Activated naive CD4-positive, alpha-beta T cell treated with anti-CD3 and anti-CD28 coated beads for 36 hours (primary cell): ENCODE measurements at regions of chr5 and their contacts with region 1.

Region 1: GRCh38 chr5:149960272-149961185 is at the start of gene SLC26A2:
- DNase-seq: peak; percentile 97
- H3K4me3 Mint-ChIP-seq: peak within 1 kb of the TSS; percentile 98
- H3K27ac Mint-ChIP-seq: peak within 1 kb of the TSS; percentile 100
- H3K4me1 Mint-ChIP-seq: peaks cover 30% of the 10 kb centered on the region
- H3K27me3 Mint-ChIP-seq: no peaks in the 10 kb centered on the region
- total RNA-seq, gene SLC26A2: 3.5 to 3.7 TPM

Region 2: DNA sequence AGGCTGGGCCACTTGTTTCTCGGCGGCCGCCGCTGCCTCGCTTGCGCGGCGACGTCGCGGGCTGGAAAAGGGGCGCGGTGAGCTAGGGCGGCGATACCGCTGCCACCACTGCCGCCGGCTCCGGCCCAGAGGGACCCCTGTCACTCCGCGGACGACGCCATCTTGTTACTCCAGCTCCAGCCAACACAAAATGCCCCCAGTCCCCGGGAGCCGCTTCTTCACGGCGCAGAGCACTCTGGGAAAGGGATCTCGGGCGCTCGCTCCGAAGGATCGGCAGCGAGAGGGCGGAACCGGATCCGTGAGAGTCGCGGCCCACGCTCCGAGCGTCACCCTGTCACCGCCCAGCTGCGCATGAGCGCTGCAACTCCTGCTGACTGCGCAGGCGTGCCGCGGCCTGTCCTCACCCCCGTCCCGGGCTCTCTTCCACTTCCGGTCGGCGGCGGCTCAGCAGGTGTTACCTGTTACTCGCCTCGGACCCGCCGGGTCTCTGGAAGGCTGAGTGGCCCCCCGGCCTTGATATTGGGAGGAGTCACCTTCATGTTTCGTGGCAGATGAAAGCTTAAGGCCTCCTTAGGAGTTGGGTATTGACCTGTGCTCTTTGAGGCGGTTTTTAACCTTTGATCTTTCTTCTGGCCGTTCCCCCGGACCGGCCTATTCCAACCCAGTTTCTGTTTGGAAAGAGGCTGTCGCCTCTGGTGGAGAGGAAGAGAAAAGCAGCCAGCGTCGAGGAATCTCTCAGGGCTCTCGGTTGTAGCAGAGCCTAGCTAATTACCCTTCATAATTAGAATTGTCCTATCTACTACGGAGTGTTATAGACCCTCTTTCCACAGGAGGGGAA is 409.1 kb before region 1 on chr5 and contains the start of gene CSNK1A1:
- CTCF ChIA-PET with region 1: no interaction called
- intact Hi-C with region 1: loop called (anchors 1 kb)
- DNase-seq: peak; percentile 99
- H3K4me3 Mint-ChIP-seq: peak within 1 kb of the TSS; percentile 97
- H3K27ac Mint-ChIP-seq: peak within 1 kb of the TSS; percentile 99
- H3K4me1 Mint-ChIP-seq: peaks cover 32% of the 10 kb centered on the region
- H3K27me3 Mint-ChIP-seq: no peaks in the 10 kb centered on the region
- total RNA-seq, gene CSNK1A1: 183 to 188 TPM

Region 3: DNA sequence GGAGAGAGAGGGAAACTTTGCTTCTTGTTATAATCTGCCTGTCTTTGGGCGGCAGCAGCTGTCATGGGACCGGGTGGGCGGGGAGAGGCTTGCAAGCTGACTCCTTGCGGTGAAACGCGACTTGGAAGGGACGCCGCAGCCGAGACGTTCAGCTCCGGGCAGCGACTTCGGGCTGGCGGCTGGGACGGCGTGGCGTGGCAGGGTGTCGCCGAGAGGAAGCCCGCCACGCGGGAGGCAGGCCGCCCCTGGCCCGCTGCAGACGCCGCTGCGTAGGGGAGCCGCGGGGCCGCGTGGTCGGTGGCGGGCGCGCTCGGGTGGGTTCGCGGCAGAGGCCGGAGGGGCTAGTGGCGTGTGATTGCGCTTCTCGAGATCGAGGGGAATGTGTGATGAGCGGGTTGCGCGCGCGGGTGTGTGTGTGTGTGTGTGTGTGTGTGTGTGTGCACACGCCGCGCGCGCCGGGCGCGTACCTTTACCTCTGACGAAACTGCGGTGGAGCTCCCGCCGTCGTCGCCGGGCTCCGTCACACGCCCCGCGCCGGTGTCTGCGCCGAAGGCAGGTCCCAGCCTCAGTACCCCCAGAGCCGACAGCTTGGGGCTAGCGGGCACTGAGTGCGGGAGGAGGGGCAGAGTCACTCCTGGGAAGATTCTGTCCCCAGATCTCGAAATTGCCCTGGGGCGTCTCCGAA is 228.7 kb before region 1 on chr5:
- CTCF ChIA-PET with region 1: no interaction called
- intact Hi-C with region 1: loop called (anchors 1 kb)
- DNase-seq: peak; percentile 90
- H3K4me3 Mint-ChIP-seq: peak overlapping the region; percentile 81
- H3K27ac Mint-ChIP-seq: peak overlapping the region; percentile 56
- H3K4me1 Mint-ChIP-seq: peaks cover 4% of the 10 kb centered on the region
- H3K27me3 Mint-ChIP-seq: no peaks in the 10 kb centered on the region

Region 4: DNA sequence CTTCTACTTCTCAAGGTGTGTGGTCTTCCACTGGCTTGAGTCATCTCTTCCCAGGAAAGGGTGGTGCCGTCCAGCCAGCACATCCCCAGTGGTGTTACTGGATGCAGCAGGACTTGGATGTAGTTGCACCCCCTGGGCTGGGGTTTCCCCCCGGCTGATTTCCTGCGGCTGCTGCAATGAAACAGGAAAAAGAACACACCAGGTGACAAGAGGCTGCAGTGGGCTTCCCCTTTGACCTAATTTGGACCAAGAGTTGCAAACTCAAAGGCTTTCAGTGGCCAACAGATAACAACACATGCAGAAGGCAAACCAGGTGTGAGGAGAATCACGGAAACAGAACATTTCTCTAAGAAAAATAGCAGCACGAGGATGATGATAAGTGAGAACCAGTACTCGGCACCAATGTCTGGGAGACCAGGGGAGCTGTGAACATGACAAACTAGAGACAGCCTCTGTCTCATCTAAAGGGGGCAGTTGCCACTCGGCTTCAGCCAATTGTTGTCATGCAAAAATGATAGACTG is 99.7 kb before region 1 on chr5:
- CTCF ChIA-PET with region 1: interaction called, 4 read pairs
- intact Hi-C with region 1: loop called (anchors 1 kb)
- DNase-seq: peak; percentile 57
- H3K4me3 Mint-ChIP-seq: no peak overlapping the region
- H3K27ac Mint-ChIP-seq: peak overlapping the region; percentile 9
- H3K4me1 Mint-ChIP-seq: peaks cover 6% of the 10 kb centered on the region
- H3K27me3 Mint-ChIP-seq: no peaks in the 10 kb centered on the region

Region 5: DNA sequence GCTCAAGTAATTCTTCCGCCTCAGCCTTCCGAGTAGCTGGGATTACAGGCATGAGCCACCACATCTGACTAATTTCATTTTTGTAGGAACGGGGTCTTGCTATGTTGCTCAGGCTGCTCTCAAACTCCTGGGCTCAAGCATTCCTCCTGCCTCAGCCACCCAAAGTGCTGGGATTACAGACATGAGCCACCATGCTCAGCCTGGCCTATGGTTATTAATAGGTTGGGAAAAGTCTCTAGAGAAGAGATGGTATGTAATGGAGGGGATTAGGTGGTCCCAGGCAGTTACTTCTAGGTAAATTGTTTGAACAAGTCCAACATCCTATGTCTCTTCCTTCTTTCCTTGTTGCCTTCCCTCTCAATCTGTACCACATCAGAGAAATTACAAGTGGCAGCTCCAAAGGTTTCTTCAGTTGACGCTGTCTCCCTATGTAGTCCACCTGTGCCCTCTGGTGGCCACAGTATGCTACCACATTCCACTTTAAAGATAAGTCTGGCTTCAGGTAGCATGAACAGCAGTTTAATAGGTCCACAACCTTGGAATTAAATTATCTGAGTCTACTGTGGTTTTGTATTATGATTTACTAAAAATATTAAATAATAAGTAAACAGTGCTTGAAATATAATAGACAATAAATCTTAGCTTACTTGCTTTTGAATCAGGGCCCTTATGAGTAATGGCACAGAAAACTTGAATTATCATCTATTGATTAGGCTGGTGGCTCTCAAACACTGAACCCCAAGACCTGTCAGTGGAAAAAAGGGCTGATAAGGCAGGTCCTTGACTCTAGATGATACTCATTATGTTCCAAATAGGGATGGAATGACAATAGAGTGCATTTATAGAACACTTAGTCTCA is 30.2 kb after region 1 on chr5:
- CTCF ChIA-PET with region 1: interaction called, 9 read pairs
- intact Hi-C with region 1: loop called (anchors 1 kb)
- DNase-seq: peak; percentile 83
- H3K4me3 Mint-ChIP-seq: no peak overlapping the region
- H3K27ac Mint-ChIP-seq: no peak overlapping the region
- H3K4me1 Mint-ChIP-seq: no peaks in the 10 kb centered on the region
- H3K27me3 Mint-ChIP-seq: no peaks in the 10 kb centered on the region

Region 6: GRCh38 chr5:150357326-150358260 is 397.1 kb after region 1 on chr5 and contains the start of gene TCOF1:
- CTCF ChIA-PET with region 1: no interaction called
- intact Hi-C with region 1: loop called (anchors 2 kb)
- DNase-seq: peak; percentile 98
- H3K4me3 Mint-ChIP-seq: peak within 1 kb of the TSS; percentile 87
- H3K27ac Mint-ChIP-seq: peak within 1 kb of the TSS; percentile 82
- H3K4me1 Mint-ChIP-seq: peaks cover 41% of the 10 kb centered on the region
- H3K27me3 Mint-ChIP-seq: no peaks in the 10 kb centered on the region
- total RNA-seq, gene TCOF1: 114 to 115 TPM